ENCODE measurements at regions of chr11 and their contacts with region 1.

Region 1: DNA sequence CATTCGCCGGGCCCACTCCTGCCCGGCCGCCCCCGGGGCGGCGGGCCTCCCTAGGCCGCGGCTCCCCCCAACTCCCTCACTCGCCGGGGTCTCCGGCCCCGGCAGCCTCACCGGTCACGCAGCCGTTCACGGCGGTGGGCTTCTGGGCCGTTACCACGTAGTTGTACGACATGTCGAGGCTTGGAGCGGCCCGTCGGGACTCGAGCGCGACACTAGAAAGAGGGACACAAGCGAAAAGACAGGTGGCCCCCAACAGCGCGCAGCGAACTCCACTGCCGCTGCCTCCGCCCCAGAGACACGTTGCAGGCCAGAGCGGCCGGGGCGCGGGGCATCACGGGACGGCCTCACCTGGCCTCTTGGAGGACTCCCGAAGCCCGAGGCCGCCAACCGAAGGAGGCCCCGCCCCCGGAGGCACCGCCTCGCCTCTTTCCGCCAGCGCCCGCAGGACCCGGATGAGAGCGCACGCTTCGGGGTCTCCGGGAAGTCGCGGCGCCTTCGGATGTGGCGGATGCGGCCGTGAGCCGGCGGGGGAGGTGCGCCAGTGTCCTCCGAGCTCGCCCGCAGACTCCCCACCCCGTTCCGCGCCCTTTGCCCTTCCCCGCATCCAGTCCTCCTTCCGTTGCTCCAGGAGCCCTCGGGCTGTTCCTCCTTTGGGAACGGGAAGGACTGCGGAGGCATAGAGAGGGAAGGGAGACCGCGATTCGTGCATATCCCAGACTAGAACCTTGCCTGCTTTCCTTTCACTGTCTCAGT is at the starts of genes DDB1 and TKFC:
- DNase-seq: peak; percentile 98
- ATAC-seq: peak; percentile 97
- total RNA-seq, gene DDB1: 113 TPM
- total RNA-seq, gene TKFC: 12.3 TPM

Region 2: GRCh38 chr11:61102667-61103571 is 230.1 kb before region 1 on chr11:
- intact Hi-C with region 1: no loop called
- DNase-seq: no peak
- ATAC-seq: no peak

Region 3: GRCh38 chr11:61361686-61362541 is 28.9 kb after region 1 on chr11 and contains the starts of genes CYB561A3 and TMEM138:
- intact Hi-C with region 1: loop called (anchors 2 kb)
- DNase-seq: peak; percentile 98
- ATAC-seq: peak; percentile 98
- total RNA-seq, gene CYB561A3: 14.6 TPM
- total RNA-seq, gene TMEM138: 18.0 TPM

Region 4: DNA sequence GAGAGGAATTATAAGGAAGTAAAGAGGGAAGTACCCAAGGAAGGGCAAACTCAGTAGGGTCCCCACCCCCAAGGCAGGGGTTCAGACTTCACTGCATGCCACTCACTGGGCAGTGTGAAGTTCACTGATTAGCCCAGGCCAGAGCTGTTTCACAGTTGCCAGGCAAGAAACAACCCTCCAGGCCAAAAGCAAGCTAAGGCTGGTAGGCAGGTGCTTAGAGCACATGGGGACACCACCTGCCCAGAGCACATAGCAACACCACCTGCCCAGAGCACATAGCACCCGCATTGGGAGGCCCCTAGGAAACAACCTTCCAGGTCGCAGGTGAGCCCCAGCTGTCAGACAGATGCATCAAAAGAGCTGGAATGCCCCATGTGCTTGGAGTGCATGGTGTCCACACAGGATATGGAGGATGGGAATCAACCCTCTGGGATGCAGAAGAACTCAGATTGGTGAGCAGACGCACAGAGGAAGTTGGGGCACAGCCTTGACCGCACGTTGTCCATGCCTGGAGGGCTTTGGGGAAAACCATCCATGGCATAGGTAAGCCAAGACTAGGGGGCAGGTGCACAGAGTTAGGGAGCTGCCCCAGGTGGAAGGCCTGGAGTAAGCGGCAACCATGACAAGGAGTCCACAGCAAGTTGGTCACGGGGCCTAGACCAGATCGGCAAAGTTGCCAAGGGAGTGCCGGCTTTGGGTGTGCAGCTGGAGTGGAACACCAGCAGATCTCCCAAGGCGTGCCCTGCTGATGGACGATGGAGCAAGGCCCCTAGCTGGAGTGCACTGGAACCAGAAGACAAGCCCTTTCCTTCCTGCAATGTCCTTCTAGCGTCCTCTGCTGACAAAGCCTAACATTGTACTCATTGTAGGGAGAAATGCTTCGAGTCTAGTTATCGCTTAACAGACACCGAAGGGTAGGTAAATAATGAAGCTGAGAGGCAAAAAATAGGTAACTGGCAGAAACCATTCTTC is 51.6 kb after region 1 on chr11:
- intact Hi-C with region 1: loop called (anchors 1 kb)
- DNase-seq: no peak
- ATAC-seq: no peak

Region 5: GRCh38 chr11:61429691-61430582 is 97.0 kb after region 1 on chr11 and contains the starts of genes CPSF7 and SDHAF2:
- intact Hi-C with region 1: loop called (anchors 5 kb)
- DNase-seq: peak; percentile 98
- ATAC-seq: peak; percentile 99
- total RNA-seq, gene CPSF7: 36.5 TPM
- total RNA-seq, gene SDHAF2: 36.8 TPM

Measured in Right ventricle myocardium inferior (tissue), 1 donor.